ENCODE measurements at regions of chr20 and their contacts with region 1.

Region 1: GRCh38 chr20:35344354-35344837 is 52.2 kb upstream of the FAM83C start:
- DNase-seq: peak; percentile 63 to 76
- ATAC-seq: peak; percentile 82 to 89 (median 85)
- H3K4me3 ChIP-seq: peak overlapping the region; percentile 44
- H3K27ac ChIP-seq: peak overlapping the region; percentile 69
- H3K4me1 ChIP-seq: peaks cover 29% of the 10 kb centered on the region
- H3K27me3 ChIP-seq: no peaks in the 10 kb centered on the region
- CTCF ChIP-seq: no peak

Region 2: DNA sequence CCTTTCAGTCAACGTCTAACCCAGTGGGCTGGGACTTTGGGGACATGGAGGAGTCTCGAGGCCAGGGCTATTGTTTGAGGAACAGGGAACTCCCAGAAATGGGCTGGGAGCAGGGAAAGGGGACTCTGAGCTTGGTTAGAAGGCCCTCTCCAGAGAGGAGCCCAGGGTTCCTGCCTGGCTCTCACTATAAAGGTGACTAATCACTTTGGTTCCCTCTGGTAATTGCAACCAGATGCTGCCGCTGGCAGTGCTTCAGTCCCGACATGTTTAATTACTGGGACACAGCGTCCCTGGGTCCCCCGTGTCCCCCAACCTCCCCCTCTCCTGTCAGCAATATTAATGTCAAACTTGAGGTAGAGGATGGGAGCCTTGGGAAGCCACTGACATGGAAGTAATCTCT is 98.6 kb after region 1 on chr20:
- intact Hi-C with region 1: loop called in 1 of 2 experiments (anchors 2 kb)
- DNase-seq: no peak
- ATAC-seq: no peak
- H3K4me3 ChIP-seq: no peak overlapping the region
- H3K27ac ChIP-seq: no peak overlapping the region
- H3K4me1 ChIP-seq: no peaks in the 10 kb centered on the region
- H3K27me3 ChIP-seq: peaks cover 0 to 10% (median 1%) of the 10 kb centered on the region in 3 donors
- CTCF ChIP-seq: no peak

Measured in psoas muscle (tissue), 8 donors.